HEK293 (cell line): ENCODE measurements at regions of chr6 and their contacts with region 1.

Region 1: DNA sequence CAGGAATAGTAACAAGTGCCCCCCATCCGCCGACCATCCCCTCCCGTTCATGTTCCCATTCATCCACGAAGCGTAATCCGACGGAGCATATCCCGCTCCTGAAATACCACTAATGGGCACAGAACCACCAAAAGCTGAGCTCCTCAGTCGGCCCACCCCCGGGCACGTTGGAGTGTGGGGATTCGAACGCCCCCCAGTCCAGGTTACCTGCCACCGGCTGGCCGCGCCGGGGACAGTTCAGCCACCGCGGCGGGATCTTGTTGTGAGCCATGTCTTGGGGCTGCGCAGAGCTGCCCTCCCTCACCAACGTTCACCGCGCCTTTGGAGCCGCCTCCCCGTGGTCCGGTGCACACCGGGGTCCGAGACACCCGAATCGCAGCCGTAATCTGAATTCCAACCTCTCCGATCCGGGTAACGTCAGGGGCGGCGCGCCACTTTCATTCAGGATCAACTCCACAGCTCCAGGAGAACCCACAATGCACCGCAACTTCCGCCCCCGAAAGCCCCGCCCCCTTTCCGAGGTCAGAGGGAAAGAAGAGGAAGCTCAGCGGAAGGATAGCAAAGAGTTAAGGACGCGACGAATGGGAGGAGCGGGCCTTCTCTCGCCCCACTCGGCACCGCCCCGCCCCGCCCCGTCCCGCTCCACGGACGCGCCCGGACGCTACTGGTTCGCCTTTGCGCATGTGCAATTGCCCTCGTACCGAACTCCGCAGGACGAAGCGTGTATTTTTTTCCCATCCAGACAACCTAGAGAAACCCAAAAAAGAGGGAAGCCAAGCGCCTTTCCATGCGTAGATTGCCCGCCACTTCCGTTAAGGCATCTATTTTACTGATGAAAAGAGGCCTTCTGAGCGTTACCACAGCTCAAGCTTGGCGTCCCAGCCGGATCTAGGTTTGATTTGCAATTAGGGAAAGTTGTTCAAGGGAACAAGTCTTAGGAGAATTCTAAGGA is at the start of gene RNGTT:
- H3K4me3 ChIP-seq: peak within 1 kb of the TSS; percentile 98
- H3K27ac ChIP-seq: peak within 1 kb of the TSS; percentile 77
- H3K4me1 ChIP-seq: no peaks in the 10 kb centered on the region
- CTCF ChIP-seq: peak; percentile 63; the same call in 1 of the 2 replicates

Region 2: GRCh38 chr6:88975369-88975768 is 12.0 kb after region 1 on chr6:
- CTCF ChIA-PET with region 1: interaction called, 3 read pairs
- POLR2A ChIA-PET with region 1: interaction called, 19 read pairs
- H3K4me3 ChIP-seq: no peak overlapping the region
- H3K27ac ChIP-seq: no peak overlapping the region
- H3K4me1 ChIP-seq: peaks cover 19% of the 10 kb centered on the region
- CTCF ChIP-seq: no peak